Left colon (tissue), 2 donors: ENCODE measurements at regions of chr2 and their contacts with region 1.

Region 1: GRCh38 chr2:66445925-66446860 is 11.3 kb downstream of the MEIS1 start:
- DNase-seq: no peak
- ATAC-seq: no peak

Region 2: GRCh38 chr2:67215214-67216055 is 769.2 kb after region 1 on chr2:
- intact Hi-C with region 1: loop called in 1 of 2 experiments (anchors 10 kb)
- DNase-seq: peak; percentile 33 to 41
- ATAC-seq: peak; percentile 62